Ascending aorta (tissue), 2 donors: ENCODE measurements at regions of chr4 and their contacts with region 1.

Region 1: DNA sequence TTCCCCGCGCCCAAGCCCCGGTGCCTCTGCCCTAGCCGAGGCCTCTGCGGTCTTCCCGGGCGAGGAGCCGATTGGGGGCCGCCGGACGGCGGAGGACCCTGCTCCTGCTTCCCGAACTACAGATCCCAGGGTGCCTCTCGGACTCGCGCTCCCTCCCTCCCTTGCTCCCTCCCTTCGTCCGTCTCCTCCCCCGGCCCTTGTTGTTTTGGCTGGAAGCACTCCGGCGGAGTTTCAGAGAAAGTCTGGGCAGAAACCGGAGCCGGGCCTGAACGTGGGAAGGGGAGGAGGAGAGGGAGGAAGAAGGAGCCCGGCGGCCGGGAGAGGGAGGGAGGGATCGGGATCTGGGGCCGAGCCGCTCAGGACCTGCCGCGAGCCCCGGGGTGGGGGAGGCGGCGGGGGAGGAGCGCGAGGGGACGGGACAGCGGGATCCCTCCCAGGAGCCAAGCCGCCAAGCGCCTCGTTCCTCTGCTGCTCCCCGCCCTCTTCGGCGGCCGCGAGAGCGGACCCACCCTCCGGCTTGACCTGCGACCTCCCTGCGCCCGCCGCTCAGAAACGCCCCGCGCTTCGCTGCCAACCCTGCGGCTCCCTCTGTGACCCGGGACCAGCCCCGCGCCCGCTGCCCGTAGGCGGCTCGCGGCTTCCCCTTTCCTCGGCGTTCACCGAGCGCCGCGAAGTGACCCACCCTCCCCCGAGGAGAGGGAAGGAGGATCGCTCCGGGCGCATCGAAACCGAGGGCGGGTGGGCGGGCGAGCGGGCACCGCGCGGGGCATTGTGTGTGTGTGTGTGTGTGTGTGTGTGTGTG is 496 bp upstream of the GAB1 start:
- DNase-seq: peak; percentile 64 to 92
- H3K4me3 ChIP-seq: peak overlapping the region; percentile 82 to 93
- H3K27ac ChIP-seq: peak overlapping the region; percentile 93 to 98
- H3K4me1 ChIP-seq: peaks cover 0 to 5% of the 10 kb centered on the region in 2 donors
- H3K27me3 ChIP-seq: no peaks in the 10 kb centered on the region
- CTCF ChIP-seq: no peak

Region 2: DNA sequence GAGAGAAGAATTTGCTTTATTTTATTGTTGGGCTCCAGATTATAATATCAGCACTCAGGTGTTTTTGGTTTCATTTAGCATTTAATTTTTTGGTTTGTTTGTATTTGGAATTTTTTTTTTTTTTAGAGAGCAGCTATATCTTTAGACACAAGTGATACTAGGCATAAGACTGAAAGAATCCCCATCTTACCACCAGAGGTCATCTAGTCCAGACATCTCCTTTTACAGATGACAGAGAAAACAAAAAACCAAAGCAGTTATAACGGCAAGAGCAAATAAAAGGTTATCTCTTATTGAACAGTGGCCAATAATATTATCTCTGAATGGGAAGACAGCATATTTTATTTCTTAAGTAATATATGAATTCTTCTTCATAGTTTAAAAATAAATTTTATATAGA is 128.6 kb before region 1 on chr4:
- intact Hi-C with region 1: loop called (anchors 5 kb)
- DNase-seq: no peak
- H3K4me3 ChIP-seq: no peak overlapping the region
- H3K27ac ChIP-seq: no peak overlapping the region
- H3K4me1 ChIP-seq: no peaks in the 10 kb centered on the region
- H3K27me3 ChIP-seq: no peaks in the 10 kb centered on the region
- CTCF ChIP-seq: peak; percentile 9 to 42 (median 32)

Region 3: GRCh38 chr4:143346206-143346605 is 10.0 kb after region 1 on chr4:
- intact Hi-C with region 1: loop called (anchors 1 kb)
- DNase-seq: no peak
- H3K4me3 ChIP-seq: peak overlapping the region in 1 of 2 donors; percentile 28
- H3K27ac ChIP-seq: no peak overlapping the region
- H3K4me1 ChIP-seq: peaks cover 14 to 34% of the 10 kb centered on the region in 2 donors
- H3K27me3 ChIP-seq: no peaks in the 10 kb centered on the region
- CTCF ChIP-seq: no peak

Region 4: GRCh38 chr4:143381171-143382118 is 45.3 kb after region 1 on chr4:
- intact Hi-C with region 1: loop called (anchors 5 kb)
- DNase-seq: peak; percentile 73 to 95
- H3K4me3 ChIP-seq: peak overlapping the region in 1 of 2 donors; percentile 45
- H3K27ac ChIP-seq: peak overlapping the region; percentile 79 to 88
- H3K4me1 ChIP-seq: peaks cover 16 to 71% of the 10 kb centered on the region in 2 donors
- H3K27me3 ChIP-seq: no peaks in the 10 kb centered on the region
- CTCF ChIP-seq: no peak

Region 5: GRCh38 chr4:143513306-143514168 is 177.4 kb after region 1 on chr4 and contains the start of gene SMARCA5:
- intact Hi-C with region 1: loop called (anchors 1 kb)
- DNase-seq: peak; percentile 94 to 99
- H3K4me3 ChIP-seq: peak within 1 kb of the TSS; percentile 65 to 84
- H3K27ac ChIP-seq: peak within 1 kb of the TSS; percentile 97 to 98
- H3K4me1 ChIP-seq: peaks cover 0 to 14% of the 10 kb centered on the region in 2 donors
- H3K27me3 ChIP-seq: no peaks in the 10 kb centered on the region
- CTCF ChIP-seq: no peak
- total RNA-seq, gene SMARCA5: 15.5 TPM